ENCODE measurements at regions of chr14 and their contacts with region 1.

Region 1: GRCh38 chr14:100780993-100781355 is 44.9 kb upstream of the MEG3 start:
- DNase-seq: no peak
- H3K4me3 ChIP-seq: no peak overlapping the region
- H3K27ac ChIP-seq: no peak overlapping the region
- H3K4me1 ChIP-seq: no peaks in the 10 kb centered on the region
- H3K27me3 ChIP-seq: no peaks in the 10 kb centered on the region
- CTCF ChIP-seq: no peak
- POLR2A ChIP-seq: no peak

Region 2: GRCh38 chr14:100815478-100816285 is 34.7 kb after region 1 on chr14:
- CTCF ChIA-PET with region 1: no interaction called
- POLR2A ChIA-PET with region 1: no interaction called
- dilution Hi-C with region 1: no loop called
- intact Hi-C with region 1: loop called (anchors 1 kb)
- DNase-seq: peak; percentile 83
- H3K4me3 ChIP-seq: no peak overlapping the region
- H3K27ac ChIP-seq: peak overlapping the region; percentile 13
- H3K4me1 ChIP-seq: peaks cover 9% of the 10 kb centered on the region
- H3K27me3 ChIP-seq: no peaks in the 10 kb centered on the region
- CTCF ChIP-seq: no peak
- POLR2A ChIP-seq: no peak

Measured in endothelial cell of umbilical vein (primary cell).